ENCODE measurements at regions of chr16 and their contacts with region 1.

Region 1: DNA sequence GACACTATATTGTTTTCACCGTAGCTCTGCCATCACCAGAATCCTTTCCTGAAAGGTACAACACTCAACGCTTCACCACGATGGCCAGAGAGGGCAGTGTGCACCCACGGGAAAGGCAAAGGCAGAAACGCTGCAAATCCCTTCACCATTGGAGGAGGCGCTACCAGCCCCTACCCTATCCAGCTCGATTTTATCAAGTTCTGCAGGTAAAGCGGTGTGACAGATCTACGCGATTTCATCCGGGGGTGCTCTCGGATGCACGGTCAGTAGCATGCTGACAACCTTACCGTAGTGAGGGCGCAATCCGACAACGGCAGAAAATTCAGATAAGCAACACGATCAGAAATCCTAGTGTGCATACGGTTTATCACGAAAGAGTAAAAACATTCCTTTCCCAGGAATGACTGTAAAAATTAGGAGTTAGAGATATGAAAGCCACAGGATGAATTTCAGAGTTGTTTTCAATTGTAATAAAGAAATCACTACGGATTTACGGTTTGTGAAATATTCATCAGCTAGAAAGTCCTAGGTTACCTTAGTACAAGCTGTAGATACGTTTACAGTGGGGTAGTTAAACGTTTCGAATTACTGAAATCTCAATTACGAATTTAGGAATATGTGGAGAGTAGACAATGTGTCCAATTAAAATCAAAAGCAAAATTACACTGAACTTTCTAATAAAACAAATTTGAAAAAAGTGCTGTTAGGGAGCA is 1.8 kb downstream of the NETO2 start:
- DNase-seq: peak; percentile 75
- H3K4me3 Mint-ChIP-seq: peak overlapping the region; percentile 79
- H3K27ac Mint-ChIP-seq: no peak overlapping the region
- H3K4me1 Mint-ChIP-seq: peaks cover 18% of the 10 kb centered on the region
- H3K27me3 Mint-ChIP-seq: peaks cover 30% of the 10 kb centered on the region

Region 2: DNA sequence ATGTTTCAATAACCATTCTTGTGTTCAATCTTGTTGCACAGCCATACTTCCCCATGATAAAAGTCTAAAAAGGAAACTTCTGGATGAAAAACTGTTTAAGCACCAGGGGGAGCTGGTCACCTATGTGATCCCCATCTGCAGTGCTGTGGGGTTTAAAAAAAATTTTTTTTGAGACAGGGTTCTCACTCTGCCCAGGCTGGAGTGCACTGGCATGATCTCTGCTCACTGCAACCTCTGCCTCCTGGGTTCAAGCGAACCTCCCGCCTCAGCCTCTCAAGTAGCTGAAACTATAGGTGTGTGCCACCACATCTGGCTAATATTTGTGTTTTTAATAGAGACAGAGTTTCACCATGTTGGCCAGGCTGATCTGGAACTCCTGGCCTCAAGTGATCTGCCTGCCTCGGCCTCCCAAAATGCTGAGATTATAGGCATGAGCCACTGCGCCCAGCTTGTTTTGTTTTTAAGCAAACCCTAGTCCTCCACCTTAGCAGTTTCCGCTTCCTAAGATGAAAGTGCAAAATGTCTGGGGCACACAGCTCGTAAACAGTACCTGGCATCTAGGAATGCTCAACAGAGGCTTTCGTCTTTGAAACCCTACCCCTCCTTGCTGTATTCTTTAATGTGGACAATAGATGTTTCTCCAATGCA is 193.9 kb before region 1 on chr16:
- intact Hi-C with region 1: loop called (anchors 5 kb)
- DNase-seq: no peak
- H3K4me3 Mint-ChIP-seq: no peak overlapping the region
- H3K27ac Mint-ChIP-seq: no peak overlapping the region
- H3K4me1 Mint-ChIP-seq: peaks cover 9% of the 10 kb centered on the region
- H3K27me3 Mint-ChIP-seq: no peaks in the 10 kb centered on the region

Region 3: DNA sequence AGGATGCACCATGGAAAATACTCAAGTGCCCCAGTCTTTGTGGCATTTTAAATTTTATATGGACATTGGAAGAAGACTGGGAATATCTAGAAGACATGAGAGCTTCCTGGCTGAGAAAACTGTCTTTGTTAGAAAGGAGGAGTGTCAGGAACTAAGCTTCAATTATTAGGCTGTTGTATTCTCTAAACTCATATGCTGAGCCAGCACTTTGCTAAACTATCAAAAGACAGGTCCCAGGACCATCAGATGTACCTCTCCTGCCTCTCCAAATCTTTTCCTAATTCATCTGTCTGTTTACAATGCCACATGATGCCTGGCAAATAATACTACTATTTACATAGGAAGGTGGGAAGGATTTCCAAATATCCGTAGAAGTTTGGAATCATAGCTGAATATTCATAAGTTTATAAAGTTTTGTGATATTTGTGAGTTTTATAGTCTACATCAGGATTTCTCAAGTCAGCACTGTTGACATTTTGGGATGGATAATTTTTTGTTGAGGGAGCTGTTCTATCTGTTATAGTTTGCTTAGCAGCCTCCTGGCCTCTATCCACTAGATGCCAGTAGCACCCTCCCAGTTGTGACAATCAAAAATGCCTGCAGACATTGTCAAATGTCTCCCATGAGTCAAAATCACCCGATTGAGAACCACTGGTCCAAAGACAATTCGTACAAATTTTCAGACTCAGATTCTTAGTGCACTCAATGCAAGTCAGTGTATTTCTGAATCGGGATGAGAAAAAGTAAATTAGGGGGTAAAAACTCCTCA is 63.0 kb after region 1 on chr16:
- intact Hi-C with region 1: no loop called
- DNase-seq: no peak
- H3K4me3 Mint-ChIP-seq: no peak overlapping the region
- H3K27ac Mint-ChIP-seq: no peak overlapping the region
- H3K4me1 Mint-ChIP-seq: no peaks in the 10 kb centered on the region
- H3K27me3 Mint-ChIP-seq: no peaks in the 10 kb centered on the region

Region 4: GRCh38 chr16:47460711-47461597 is 319.0 kb after region 1 on chr16 and contains the starts of genes ITFG1 and PHKB:
- intact Hi-C with region 1: loop called (anchors 5 kb)
- DNase-seq: peak; percentile 95
- H3K4me3 Mint-ChIP-seq: peak within 1 kb of the TSS; percentile 98
- H3K27ac Mint-ChIP-seq: peak within 1 kb of the TSS; percentile 94
- H3K4me1 Mint-ChIP-seq: peaks cover 36% of the 10 kb centered on the region
- H3K27me3 Mint-ChIP-seq: no peaks in the 10 kb centered on the region
- total RNA-seq, gene ITFG1: 23.9 and 28.7 TPM in 2 replicates
- total RNA-seq, gene PHKB: 29.7 and 34.6 TPM in 2 replicates

Region 5: DNA sequence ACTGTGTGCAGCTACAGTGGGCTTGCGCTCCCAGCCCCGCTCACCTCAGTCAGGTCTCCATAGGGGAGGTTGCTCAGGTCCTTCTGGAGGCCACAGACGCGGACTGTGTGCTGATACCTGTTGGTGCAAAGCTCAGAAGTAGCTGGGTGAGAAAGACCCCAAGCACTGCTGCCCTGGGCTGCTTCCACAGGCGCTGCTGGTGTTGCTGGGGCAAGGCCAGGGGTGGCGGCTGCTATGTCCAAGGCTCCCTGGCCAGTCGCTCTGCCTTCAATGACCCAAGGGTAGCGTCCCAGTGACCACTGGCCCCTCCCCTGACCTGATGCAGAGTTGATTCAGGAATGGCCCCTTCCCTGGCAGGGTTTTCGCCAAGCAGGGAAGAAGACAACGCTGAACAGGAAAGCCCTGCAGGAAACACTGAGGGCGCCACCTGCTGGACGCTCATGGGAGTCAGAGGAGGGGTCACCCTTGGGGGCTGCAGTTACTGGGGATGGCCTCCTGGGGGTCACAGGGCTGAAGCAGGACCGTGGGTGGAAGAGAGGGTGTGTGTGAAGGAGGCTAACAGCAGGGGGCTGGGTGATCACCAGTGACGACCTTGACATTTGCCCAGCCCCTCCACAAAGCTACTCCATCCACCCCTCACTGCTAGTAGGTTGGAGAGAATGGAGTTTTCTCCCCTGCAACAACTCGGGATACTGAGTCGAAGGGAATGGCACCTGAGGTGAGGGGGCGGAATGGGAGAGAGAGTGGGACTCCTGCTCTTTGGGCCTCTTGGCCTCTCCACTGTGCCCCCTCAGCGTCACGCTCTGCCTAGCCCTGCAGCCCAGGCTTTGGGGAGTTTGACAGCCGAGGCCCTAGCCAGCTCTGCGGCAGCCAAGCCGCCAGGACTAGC is 975.5 kb after region 1 on chr16:
- intact Hi-C with region 1: loop called (anchors 2 kb)
- DNase-seq: peak; percentile 36
- H3K4me3 Mint-ChIP-seq: no peak overlapping the region
- H3K27ac Mint-ChIP-seq: no peak overlapping the region
- H3K4me1 Mint-ChIP-seq: peaks cover 6% of the 10 kb centered on the region
- H3K27me3 Mint-ChIP-seq: peaks cover 3% of the 10 kb centered on the region

Region 6: GRCh38 chr16:48632137-48632774 is 1490.3 kb after region 1 on chr16:
- intact Hi-C with region 1: loop called (anchors 5 kb)
- DNase-seq: no peak
- H3K4me3 Mint-ChIP-seq: no peak overlapping the region
- H3K27ac Mint-ChIP-seq: no peak overlapping the region
- H3K4me1 Mint-ChIP-seq: peaks cover 10% of the 10 kb centered on the region
- H3K27me3 Mint-ChIP-seq: peaks cover 2% of the 10 kb centered on the region

Measured in activated T-helper 2 cell treated with anti-CD3 and anti-CD28 coated beads, Interferon-gamma antibody, Interleukin-2, Interleukin-4, amounts not matched to agents 10 μg/mL and 5 μg/mL and 100 μg/mL, durations not matched to agents 14 hours and 24 hours and 36 hours (primary cell).